Dorsolateral prefrontal cortex (tissue), 120 donors: ENCODE measurements at regions of chr12 and their contacts with region 1.

Region 1: GRCh38 chr12:17853054-17853453 is 236.9 kb downstream of the RERGL start:
- DNase-seq: no peak
- H3K4me3 ChIP-seq: no peak overlapping the region
- H3K27ac ChIP-seq: no peak overlapping the region
- H3K27me3 ChIP-seq: no peaks in the 10 kb centered on the region
- CTCF ChIP-seq: no peak

Region 2: GRCh38 chr12:17763366-17763765 is 89.7 kb before region 1 on chr12:
- intact Hi-C with region 1: loop called (anchors 5 kb)
- DNase-seq: peak in 2 of 10 donors; percentile 23 to 32
- H3K4me3 ChIP-seq: no peak overlapping the region
- H3K27ac ChIP-seq: peak overlapping the region in 1 of 59 donors; percentile 5
- H3K27me3 ChIP-seq: no peaks in the 10 kb centered on the region
- CTCF ChIP-seq: no peak

Region 3: GRCh38 chr12:17976202-17976601 is 123.1 kb after region 1 on chr12:
- intact Hi-C with region 1: no loop called
- DNase-seq: no peak
- H3K4me3 ChIP-seq: no peak overlapping the region
- H3K27ac ChIP-seq: no peak overlapping the region
- H3K27me3 ChIP-seq: peaks cover 0 to 2% (median 0%) of the 10 kb centered on the region in 45 donors
- CTCF ChIP-seq: no peak

Region 4: GRCh38 chr12:17999174-17999801 is 146.2 kb after region 1 on chr12:
- intact Hi-C with region 1: no loop called
- DNase-seq: no peak
- H3K4me3 ChIP-seq: no peak overlapping the region
- H3K27ac ChIP-seq: no peak overlapping the region
- H3K27me3 ChIP-seq: no peaks in the 10 kb centered on the region
- CTCF ChIP-seq: no peak